Activated CD4-positive, alpha-beta memory T cell treated with anti-CD3 and anti-CD28 coated beads for 36 hours (primary cell): ENCODE measurements at regions of chr11 and their contacts with region 1.

Region 1: DNA sequence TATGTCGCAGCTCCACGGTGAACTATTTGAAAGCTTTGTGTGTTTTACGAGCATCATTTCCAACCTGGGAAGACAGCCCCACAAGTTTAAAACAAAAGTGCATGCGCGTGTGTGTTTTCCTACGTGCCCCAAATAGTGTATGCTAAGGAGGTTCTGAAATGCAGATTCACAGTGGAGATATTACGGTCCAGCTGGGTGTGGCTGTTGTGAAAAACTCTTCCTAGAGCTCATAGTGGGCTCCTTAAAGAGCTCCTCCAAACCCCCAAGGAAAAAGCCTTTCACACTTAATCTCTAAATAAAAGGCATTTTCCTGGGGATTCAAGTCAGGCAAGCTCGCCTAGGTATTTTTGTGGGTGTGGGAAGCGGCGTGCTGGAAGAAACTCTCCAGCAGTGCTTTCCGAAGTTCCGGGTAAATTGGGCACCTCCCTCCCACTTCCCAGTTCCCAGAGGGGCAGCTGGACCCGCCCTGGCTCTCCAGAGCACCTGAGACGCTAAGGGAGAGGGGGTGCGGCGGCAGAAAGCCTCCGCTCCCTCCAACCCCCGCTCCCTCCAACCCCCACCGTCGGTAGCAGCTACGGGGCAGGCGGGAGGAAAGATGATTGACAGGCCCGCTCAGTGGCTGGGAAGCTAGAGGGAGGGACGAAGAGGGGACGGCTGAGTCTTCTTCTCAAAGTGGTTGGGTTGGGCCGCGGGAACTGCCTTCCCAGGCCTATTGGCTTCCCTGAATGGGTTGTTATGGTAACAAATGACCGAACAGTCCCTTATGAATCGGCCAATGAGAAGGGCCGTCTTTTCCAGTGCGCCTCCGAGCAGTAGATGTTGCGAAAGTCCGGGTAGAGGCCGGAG is 558 bp upstream of the PCF11 start:
- DNase-seq: peak; percentile 99
- H3K4me3 Mint-ChIP-seq: peak overlapping the region; percentile 100
- H3K27ac Mint-ChIP-seq: peak overlapping the region; percentile 100
- H3K4me1 Mint-ChIP-seq: peaks cover 20% of the 10 kb centered on the region
- H3K27me3 Mint-ChIP-seq: no peaks in the 10 kb centered on the region

Region 2: DNA sequence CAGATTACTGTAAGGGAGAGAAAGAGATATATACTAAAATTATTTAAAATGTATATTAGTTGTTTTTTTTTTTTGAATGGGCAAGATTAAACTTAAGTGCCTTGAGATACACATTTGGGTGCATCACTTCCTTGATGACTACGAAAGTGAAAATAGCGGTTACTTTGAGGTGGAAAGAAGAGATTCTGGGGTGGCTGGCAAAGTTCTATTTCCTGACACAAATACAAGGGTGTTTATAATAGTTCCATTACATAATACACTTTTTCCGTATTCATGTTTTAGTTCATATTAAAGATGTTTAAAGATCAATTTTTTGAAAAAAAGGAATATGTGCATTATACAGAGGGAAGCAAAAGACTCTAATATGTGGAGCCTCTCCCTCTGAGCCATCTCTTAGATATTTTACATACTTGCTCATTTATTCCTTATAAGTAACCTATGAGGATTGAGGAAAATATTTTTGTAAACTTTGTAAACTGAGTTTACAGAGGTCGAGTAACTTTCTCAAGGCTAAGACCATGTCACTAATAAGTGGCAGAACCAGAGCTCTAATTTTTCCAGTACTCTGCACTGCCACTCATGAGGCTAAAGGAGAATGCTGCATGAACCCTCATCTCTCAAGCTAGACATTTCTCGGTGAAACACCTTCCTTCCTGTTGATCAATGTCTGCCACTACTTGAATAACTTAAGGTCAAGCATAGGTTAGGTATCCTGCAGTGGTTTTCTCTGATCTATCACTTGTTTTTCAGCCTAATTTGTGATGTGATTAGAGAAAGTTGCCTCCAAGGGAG is 196.2 kb before region 1 on chr11:
- CTCF ChIA-PET with region 1: no interaction called
- POLR2A ChIA-PET with region 1: interaction called, 4 read pairs
- intact Hi-C with region 1: loop called (anchors 1 kb)
- DNase-seq: peak; percentile 33
- H3K4me3 Mint-ChIP-seq: peak overlapping the region; percentile 4
- H3K27ac Mint-ChIP-seq: peak overlapping the region; percentile 67
- H3K4me1 Mint-ChIP-seq: peaks cover 65% of the 10 kb centered on the region
- H3K27me3 Mint-ChIP-seq: no peaks in the 10 kb centered on the region

Region 3: GRCh38 chr11:83063073-83063754 is 93.2 kb before region 1 on chr11:
- CTCF ChIA-PET with region 1: no interaction called
- POLR2A ChIA-PET with region 1: interaction called, 5 read pairs
- intact Hi-C with region 1: loop called (anchors 2 kb)
- DNase-seq: peak; percentile 28
- H3K4me3 Mint-ChIP-seq: peak overlapping the region; percentile 71
- H3K27ac Mint-ChIP-seq: peak overlapping the region; percentile 93
- H3K4me1 Mint-ChIP-seq: peaks cover 44% of the 10 kb centered on the region
- H3K27me3 Mint-ChIP-seq: no peaks in the 10 kb centered on the region

Region 4: GRCh38 chr11:83122766-83123165 is 33.6 kb before region 1 on chr11:
- CTCF ChIA-PET with region 1: no interaction called
- POLR2A ChIA-PET with region 1: interaction called, 7 read pairs
- intact Hi-C with region 1: loop called (anchors 1 kb)
- DNase-seq: no peak
- H3K4me3 Mint-ChIP-seq: no peak overlapping the region
- H3K27ac Mint-ChIP-seq: no peak overlapping the region
- H3K4me1 Mint-ChIP-seq: peaks cover 33% of the 10 kb centered on the region
- H3K27me3 Mint-ChIP-seq: no peaks in the 10 kb centered on the region

Region 5: DNA sequence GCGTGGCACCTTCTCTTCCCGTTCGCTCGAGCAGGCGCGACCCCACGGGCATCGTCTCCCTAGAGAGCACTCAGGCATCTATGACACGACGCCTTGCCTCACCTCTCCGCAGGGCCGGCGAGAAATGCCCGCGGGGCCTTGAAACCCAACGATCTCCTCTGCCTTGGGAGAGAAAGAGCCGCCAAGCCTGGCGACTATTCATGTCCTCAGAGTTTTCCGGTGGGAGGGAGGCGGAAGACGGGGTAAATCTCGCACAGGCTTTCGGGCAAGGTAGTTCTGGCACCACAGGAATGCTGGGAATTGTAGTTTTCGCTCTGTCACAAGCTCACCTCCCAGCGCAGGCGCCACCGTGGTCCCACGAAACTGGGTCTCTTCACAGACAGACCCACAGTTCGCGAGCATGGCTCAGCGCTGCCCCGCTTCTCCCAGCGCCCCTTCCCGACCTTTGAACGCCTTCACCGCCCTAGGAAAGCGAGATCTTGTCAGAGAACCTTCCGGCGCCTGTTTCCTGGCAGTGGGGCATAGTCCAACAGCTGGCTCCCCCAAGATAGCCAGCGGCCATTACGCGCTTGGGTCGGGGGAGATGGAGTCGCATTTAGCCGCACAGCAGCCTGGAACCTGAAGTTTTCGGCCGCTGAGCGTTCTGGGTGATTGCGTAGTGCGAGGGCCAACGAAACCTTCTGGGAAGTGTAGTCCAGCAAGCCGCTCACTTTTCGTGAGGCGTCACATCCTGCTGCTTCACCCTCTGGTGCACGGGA is 129.6 kb after region 1 on chr11 and contains the start of gene CCDC90B:
- CTCF ChIA-PET with region 1: interaction called, 4 read pairs
- POLR2A ChIA-PET with region 1: interaction called, 15 read pairs
- intact Hi-C with region 1: loop called (anchors 1 kb)
- DNase-seq: peak; percentile 96
- H3K4me3 Mint-ChIP-seq: peak within 1 kb of the TSS; percentile 92
- H3K27ac Mint-ChIP-seq: peak within 1 kb of the TSS; percentile 99
- H3K4me1 Mint-ChIP-seq: peaks cover 35% of the 10 kb centered on the region
- H3K27me3 Mint-ChIP-seq: no peaks in the 10 kb centered on the region
- total RNA-seq, gene CCDC90B: 29.2 to 32.3 TPM

Region 6: GRCh38 chr11:83895516-83895915 is 739.1 kb after region 1 on chr11:
- CTCF ChIA-PET with region 1: no interaction called
- POLR2A ChIA-PET with region 1: no interaction called
- intact Hi-C with region 1: no loop called
- DNase-seq: no peak
- H3K4me3 Mint-ChIP-seq: no peak overlapping the region
- H3K27ac Mint-ChIP-seq: no peak overlapping the region
- H3K4me1 Mint-ChIP-seq: no peaks in the 10 kb centered on the region
- H3K27me3 Mint-ChIP-seq: no peaks in the 10 kb centered on the region